ENCODE measurements at regions of chr7 and their contacts with region 1.

Region 1: DNA sequence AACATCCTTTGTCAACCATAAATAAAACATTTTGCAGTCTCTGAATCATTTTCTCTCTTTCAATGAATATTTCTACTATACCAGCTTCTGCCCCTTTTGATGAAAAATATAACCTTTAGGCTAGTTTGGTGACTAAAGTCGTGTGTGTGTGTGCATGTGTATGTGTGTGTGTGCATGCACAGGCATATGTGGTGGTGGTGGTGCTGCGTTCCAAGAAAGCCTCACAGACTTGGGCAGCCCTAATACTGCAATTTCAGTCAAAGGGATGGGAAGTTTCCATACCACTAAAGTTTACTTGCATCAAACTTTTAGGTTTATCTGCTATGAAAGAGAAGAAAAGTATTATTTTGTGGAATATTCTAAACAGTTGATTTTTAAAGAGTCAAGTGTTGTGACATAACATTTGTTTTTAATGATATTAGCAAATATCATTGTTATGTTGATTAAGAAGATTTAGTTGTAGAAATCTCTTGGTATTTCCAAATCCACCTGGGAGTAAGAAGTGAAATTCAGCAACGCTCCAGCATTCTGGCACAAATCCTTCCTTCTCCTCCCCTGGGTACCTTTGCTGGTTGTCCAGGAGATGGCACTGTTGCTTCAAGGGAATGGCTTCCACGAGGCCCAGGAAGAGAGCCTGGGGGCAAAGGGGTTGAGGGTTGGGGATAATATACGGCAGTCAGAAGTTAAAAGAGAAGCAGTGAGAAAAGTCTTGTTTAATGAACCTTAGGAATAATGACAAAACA is 41.5 kb downstream of the ASB4 start:
- DNase-seq: peak; percentile 64
- CTCF ChIP-seq: peak; percentile 82

Region 2: GRCh38 chr7:95503271-95504131 is 23.7 kb before region 1 on chr7:
- CTCF ChIA-PET with region 1: no interaction called
- POLR2A ChIA-PET with region 1: no interaction called
- DNase-seq: no peak
- CTCF ChIP-seq: no peak

Region 3: GRCh38 chr7:95684037-95684436 is 156.8 kb after region 1 on chr7:
- CTCF ChIA-PET with region 1: interaction called, 240 read pairs
- POLR2A ChIA-PET with region 1: no interaction called
- DNase-seq: no peak
- CTCF ChIP-seq: peak; percentile 29

Region 4: DNA sequence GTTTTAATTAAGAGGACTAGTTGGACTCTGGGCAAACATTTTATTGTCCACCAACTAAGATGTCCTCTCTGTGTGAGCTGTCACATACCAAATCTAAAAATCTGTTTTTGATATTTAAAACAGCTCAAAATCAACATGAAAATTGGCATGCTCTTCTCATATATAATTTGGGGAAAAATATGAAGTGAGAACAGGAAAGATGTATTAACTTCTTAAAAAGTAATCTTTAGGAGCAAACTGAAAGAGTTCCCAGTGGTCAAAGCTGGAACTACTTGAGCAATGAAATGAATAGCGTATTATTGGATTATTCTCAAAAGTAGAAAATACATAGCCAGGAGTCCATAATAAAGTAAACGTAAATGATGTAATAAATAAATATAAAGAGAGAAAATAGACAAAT is 392.4 kb after region 1 on chr7:
- CTCF ChIA-PET with region 1: no interaction called
- POLR2A ChIA-PET with region 1: no interaction called
- DNase-seq: no peak
- CTCF ChIP-seq: no peak